ENCODE measurements at regions of chr1 and their contacts with region 1.

Region 1: DNA sequence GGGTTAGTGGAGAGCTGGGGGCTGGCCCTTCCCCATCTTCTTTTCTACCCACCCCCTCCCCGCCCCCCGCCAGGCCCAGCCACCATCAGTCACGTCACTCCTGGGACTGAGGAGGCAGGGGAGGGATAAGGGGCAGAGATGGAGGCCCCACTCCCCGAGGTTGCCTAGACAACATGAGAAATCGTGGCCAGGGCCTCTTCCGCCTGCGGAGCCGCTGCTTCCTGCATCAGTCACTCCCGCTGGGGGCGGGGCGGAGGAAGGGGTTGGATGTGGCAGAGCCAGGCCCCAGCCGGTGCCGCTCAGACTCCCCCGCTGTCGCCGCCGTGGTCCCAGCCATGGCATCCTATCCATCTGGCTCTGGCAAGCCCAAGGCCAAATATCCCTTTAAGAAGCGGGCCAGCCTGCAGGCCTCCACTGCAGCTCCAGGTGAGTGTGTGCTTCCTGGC is 1.2 kb downstream of the AMPD2 start:
- ATAC-seq: peak; percentile 57 to 87 (median 82)
- H3K4me3 ChIP-seq: peak overlapping the region; percentile 51 to 72 (median 66)
- H3K27ac ChIP-seq: peak overlapping the region; percentile 88 to 92
- H3K4me1 ChIP-seq: peaks cover 62 to 72% of the 10 kb centered on the region in 2 donors

Region 2: DNA sequence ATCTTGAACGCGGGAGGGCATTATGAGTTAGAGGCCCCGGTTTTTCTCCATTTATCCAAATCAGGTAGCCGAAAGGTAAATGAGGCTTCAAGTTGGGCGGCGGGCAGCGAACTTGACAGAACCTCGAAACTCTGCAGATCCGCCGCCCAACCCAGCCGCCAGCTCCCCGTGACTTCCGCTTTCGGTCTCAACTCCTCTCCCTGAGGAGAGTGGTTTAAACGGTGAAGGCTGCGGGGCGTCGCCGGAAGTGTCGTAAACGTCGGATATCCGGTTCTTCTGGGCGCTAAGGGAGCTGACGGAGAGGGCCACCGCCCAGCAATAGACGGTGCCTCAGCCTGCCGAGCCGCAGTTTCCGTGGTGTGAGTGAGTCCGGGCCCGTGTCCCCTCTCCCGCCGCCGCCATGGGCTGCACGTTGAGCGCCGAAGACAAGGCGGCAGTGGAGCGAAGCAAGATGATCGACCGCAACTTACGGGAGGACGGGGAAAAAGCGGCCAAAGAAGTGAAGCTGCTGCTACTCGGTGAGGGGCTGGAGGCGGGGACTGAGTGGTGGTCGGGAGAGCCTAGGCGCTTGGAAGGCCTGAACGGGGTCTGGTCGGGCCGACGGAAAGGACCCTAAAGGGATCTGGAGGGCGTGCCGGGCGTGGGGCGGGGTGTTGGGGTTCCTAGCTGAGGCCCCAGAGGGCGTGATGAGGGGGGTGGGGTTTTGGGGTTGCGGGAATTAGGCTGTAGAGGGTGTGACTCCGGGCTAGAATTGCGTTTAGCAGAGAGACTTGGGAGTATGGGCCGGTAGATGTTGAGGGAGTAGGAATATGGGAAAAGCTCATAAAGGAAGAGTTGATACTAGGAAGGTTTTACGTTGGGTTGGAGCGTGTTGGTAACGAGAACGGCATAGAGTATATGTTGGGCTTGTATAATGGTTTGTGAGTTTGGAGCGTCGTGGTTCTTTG is 72.3 kb before region 1 on chr1 and contains the start of gene GNAI3:
- in situ Hi-C with region 1: loop called in 1 of 9 experiments (anchors 10 kb)
- ATAC-seq: peak; percentile 89 to 99 (median 98)
- H3K4me3 ChIP-seq: peak within 1 kb of the TSS; percentile 81 to 97 (median 90)
- H3K27ac ChIP-seq: peak within 1 kb of the TSS; percentile 90 to 93
- H3K4me1 ChIP-seq: peaks cover 15 to 35% of the 10 kb centered on the region in 2 donors
- total RNA-seq, gene GNAI3: 8.8 to 15.5 (median 13.9) TPM

Measured in motor neuron (in vitro differentiated cells).